Activated naive CD4-positive, alpha-beta T cell treated with anti-CD3 and anti-CD28 coated beads, Interleukin-2, amount 10 ng/mL, durations not matched to agents 7 days and 5 days (primary cell): ENCODE measurements at regions of chr10 and their contacts with region 1.

Region 1: DNA sequence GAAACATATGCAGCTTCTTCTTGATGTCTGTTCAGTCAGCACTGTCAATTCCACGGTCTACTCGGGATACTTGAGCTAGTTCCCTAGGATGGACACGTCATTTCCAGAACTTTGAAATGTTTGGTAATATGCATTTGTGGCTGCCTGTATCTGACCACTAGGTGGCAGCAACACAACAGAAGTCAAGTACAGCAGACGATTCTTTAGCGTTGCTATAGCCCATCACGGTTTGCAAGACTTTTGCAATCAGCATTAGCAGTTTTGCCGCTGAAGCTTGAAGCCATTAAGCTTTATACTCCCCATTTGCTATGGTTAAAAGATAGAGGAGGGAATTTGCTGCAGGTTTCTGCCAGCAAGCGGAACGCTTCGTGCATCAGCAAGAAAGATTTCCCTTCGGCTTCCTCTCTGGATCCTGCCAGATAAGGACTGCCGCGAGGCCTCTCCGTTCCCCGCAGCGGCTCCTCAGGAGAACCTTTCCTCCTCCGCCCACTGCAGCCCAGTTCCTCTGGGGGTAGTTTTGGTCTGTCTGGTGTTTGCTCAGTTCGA is 63.5 kb downstream of the ABCC2 start:
- DNase-seq: peak; percentile 79
- H3K4me3 Mint-ChIP-seq: no peak overlapping the region
- H3K27ac Mint-ChIP-seq: no peak overlapping the region
- H3K4me1 Mint-ChIP-seq: peaks cover 9% of the 10 kb centered on the region
- H3K27me3 Mint-ChIP-seq: peaks cover 9% of the 10 kb centered on the region

Region 2: GRCh38 chr10:99612167-99612831 is 233.6 kb before region 1 on chr10:
- CTCF ChIA-PET with region 1: no interaction called
- DNase-seq: peak; percentile 34
- H3K4me3 Mint-ChIP-seq: no peak overlapping the region
- H3K27ac Mint-ChIP-seq: no peak overlapping the region
- H3K4me1 Mint-ChIP-seq: peaks cover 27% of the 10 kb centered on the region
- H3K27me3 Mint-ChIP-seq: no peaks in the 10 kb centered on the region

Region 3: GRCh38 chr10:99859585-99859984 is 13.7 kb after region 1 on chr10:
- CTCF ChIA-PET with region 1: interaction called, 10 read pairs
- DNase-seq: no peak
- H3K4me3 Mint-ChIP-seq: no peak overlapping the region
- H3K27ac Mint-ChIP-seq: no peak overlapping the region
- H3K4me1 Mint-ChIP-seq: no peaks in the 10 kb centered on the region
- H3K27me3 Mint-ChIP-seq: peaks cover 48% of the 10 kb centered on the region

Region 4: DNA sequence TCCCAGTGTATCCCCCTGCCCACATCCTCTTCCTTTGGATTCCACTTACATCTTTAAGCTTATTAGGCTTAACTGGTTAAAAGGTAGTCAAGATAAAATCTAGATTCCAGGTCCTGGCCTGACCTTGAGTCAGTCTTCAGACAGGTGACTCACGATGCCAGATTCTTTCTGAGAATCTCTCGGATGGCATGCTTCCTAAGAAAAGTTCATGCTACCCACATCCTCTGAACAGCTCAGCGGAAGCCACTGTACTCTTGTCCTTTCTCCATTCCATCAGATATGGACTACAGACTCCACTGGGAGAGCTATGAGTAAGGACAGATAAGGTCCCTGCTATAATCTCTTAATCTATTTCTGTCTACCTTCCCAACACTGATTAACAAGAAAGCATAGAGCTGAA is 120.4 kb after region 1 on chr10:
- CTCF ChIA-PET with region 1: interaction called, 26 read pairs
- DNase-seq: no peak
- H3K4me3 Mint-ChIP-seq: no peak overlapping the region
- H3K27ac Mint-ChIP-seq: no peak overlapping the region
- H3K4me1 Mint-ChIP-seq: peaks cover 7% of the 10 kb centered on the region
- H3K27me3 Mint-ChIP-seq: no peaks in the 10 kb centered on the region

Region 5: GRCh38 chr10:100009793-100010676 is 164.1 kb after region 1 on chr10 and contains the start of gene DNMBP:
- CTCF ChIA-PET with region 1: interaction called, 25 read pairs
- DNase-seq: peak; percentile 86
- H3K4me3 Mint-ChIP-seq: peak within 1 kb of the TSS; percentile 86
- H3K27ac Mint-ChIP-seq: no peak within 1 kb of the TSS
- H3K4me1 Mint-ChIP-seq: peaks cover 43% of the 10 kb centered on the region
- H3K27me3 Mint-ChIP-seq: peaks cover 39% of the 10 kb centered on the region